ENCODE measurements at regions of chr1 and their contacts with region 1.

Region 1: DNA sequence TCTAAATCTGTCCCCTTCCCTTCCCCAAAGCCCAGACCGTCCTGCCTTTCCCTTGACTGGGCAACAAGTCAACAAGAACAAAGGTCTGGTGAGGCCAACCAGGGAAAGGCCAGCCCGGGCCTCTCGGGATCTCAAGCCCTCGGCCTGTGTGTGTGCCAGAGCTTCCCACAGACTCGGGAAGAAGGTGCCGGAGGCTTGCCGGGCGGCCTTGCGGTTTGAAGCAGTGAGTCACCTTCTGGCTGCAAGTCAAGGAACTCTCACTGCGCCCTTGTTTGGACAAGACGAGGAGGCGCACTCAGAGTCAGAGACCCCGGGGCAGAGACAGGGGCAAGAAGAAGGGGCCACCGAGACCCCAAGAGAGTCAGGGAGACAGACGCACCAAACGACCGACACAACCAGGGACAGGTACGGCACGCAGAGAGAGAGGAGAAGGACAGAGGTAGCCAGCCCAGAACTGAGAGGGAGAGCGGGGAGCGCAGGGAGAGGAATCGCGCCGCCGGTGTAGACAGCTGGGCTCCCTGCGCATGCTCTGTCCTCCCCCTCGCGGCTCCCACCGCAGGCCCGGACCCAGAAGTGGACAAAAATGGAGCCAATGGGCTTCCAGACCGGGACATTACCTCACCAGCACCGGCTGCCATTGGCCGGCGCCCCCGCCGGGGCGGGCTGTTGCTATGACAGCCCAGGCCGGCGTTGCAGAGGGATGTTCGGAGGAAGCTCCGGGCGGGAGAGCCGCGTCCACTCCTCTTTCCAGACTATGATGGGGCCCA is 66.6 kb upstream of the LAPTM5 start:
- DNase-seq: peak; percentile 87 to 98
- H3K4me3 ChIP-seq: peak overlapping the region; percentile 46 to 58
- H3K27ac ChIP-seq: peak overlapping the region; percentile 95
- H3K4me1 ChIP-seq: peaks cover 4 to 13% of the 10 kb centered on the region in 2 donors
- H3K27me3 ChIP-seq: no peaks in the 10 kb centered on the region
- CTCF ChIP-seq: peak in 1 of 3 experiments; percentile 5

Region 2: DNA sequence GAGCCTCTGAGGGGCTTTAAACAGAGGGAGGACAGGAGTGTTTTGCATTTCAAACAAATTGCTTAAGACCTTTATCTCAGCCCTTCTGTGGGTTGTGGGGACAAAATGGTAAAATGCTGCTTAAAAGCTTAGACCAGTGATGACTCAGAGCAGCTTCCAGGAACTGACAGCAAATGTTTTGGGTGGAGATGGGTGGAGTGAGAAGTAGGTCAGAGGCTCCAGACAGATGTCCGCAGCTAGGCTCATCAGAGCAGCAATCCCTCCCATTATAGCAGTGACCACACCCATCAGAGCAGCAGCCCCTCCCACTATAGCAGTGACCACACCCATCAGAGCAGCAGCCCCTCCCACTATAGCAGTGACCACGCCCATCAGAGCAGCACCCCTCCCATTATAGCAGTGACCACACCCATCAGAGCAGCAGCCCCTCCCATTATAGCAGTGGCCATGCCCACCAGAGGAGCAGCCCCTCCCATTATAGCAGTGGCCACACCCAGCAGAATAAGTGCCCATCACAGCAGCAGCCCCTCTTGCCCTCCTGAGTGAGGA is 632.9 kb before region 1 on chr1:
- intact Hi-C with region 1: no loop called
- DNase-seq: peak in 1 of 2 donors; percentile 69
- H3K4me3 ChIP-seq: no peak overlapping the region
- H3K27ac ChIP-seq: peak overlapping the region in 1 of 2 donors; percentile 40
- H3K4me1 ChIP-seq: no peaks in the 10 kb centered on the region
- H3K27me3 ChIP-seq: no peaks in the 10 kb centered on the region
- CTCF ChIP-seq: no peak

Region 3: DNA sequence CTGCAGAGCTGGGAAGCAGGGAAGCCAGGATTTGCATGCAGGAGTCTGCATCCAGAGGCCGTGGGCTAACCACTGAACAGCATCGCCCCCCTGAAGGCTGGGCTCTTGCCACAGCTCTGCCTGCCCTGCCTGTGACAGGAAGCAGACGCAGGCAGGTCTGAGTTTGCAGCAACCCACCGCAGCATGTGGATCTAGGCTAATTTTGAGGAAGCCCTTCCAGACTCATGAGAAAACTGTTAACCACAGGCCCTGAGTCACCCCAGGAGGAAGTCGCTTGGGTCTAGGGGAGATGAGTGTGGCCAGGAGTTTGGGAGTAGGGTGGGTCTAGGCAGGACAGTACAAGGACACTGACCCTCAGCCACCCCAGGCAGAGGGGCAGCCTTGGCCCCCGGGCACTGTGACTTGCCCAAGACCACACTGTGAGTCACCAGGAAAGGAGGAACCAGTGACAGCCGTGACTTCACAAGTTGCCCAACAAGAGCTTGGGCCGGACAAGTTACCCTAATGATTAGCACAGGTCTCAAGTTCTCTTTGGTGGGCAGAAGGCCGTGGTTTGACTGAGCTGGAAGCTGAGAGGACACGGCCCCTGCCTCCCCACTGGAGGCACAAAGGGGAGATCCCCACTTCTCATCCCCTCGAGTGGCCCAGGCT is 67.5 kb before region 1 on chr1:
- intact Hi-C with region 1: no loop called
- DNase-seq: peak; percentile 74 to 86
- H3K4me3 ChIP-seq: peak overlapping the region; percentile 39 to 60
- H3K27ac ChIP-seq: peak overlapping the region; percentile 76 to 78
- H3K4me1 ChIP-seq: peaks cover under 1 to 5% of the 10 kb centered on the region in 2 donors
- H3K27me3 ChIP-seq: no peaks in the 10 kb centered on the region
- CTCF ChIP-seq: no peak

Region 4: DNA sequence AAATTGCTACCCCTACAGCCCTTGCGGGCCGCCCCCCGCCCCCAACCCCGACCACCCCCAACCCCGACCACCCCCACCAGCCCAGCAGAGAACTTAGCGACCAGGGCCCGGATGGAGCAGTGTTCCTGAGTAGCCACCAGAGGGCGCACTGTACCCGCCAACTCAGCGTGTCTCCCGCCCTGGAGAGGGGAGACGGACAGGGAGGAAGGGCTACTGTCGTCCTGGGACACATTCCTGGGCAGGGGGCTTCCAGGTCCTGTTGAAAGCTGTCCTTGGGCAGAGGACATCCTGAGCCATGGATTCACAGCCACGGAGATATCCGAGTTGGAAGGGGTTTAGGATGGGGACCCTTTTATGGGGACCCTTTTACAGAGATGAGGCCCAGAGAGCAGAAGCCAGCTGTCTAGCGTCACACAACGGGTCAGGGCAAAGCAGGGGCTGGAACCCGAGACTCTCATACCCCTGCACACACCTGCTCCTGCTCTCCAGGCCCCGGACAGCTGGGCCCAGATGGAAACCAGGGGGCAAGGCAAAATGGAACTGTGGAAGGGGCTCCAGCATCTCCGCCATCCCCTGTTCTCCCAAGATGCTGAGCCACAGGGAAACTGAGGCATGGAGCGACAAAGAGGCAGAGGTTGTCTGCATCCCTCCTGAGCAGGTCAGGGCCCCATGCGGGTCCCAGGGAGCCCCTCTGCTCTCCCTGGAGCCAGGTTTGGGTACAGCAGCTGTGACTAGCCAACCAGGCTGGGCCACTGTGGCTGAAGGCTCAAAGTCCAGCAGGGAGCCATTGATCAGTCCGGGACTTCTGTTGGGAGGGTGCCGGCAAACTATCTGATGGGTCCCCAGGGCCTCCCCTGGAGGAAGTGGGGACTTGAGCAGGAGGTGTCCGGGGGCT is 41.5 kb before region 1 on chr1:
- intact Hi-C with region 1: no loop called
- DNase-seq: no peak
- H3K4me3 ChIP-seq: no peak overlapping the region
- H3K27ac ChIP-seq: no peak overlapping the region
- H3K4me1 ChIP-seq: peaks cover 0 to 2% of the 10 kb centered on the region in 2 donors
- H3K27me3 ChIP-seq: no peaks in the 10 kb centered on the region
- CTCF ChIP-seq: peak; percentile 52 to 85 (median 84)

Region 5: GRCh38 chr1:30864681-30865080 is 40.5 kb after region 1 on chr1:
- intact Hi-C with region 1: no loop called
- DNase-seq: no peak
- H3K4me3 ChIP-seq: no peak overlapping the region
- H3K27ac ChIP-seq: no peak overlapping the region
- H3K4me1 ChIP-seq: no peaks in the 10 kb centered on the region
- H3K27me3 ChIP-seq: no peaks in the 10 kb centered on the region
- CTCF ChIP-seq: no peak

Region 6: DNA sequence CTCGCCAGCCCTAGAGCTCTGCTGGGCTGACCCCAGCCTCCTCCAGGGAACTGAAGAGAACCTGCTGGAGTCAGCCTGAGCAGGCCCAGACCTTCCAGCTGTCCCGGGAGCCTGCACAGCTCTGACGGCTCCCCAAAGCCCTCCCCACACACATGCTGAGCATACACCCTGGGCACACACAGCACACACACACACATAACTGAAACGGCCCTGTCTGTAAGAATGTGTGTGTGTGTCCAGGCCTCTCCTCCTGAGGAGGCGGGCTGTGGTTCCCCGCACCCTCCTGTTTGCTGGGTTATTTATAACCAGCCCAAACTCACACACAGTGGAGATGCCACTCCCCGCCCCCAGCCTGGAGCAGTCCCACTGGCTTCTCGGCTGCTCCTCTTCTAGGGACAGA is 64.2 kb after region 1 on chr1:
- intact Hi-C with region 1: loop called (anchors 1 kb)
- DNase-seq: peak; percentile 56 to 94
- H3K4me3 ChIP-seq: peak overlapping the region in 1 of 2 donors; percentile 3
- H3K27ac ChIP-seq: peak overlapping the region; percentile 93 to 97
- H3K4me1 ChIP-seq: peaks cover 12 to 52% of the 10 kb centered on the region in 2 donors
- H3K27me3 ChIP-seq: no peaks in the 10 kb centered on the region
- CTCF ChIP-seq: no peak